ENCODE measurements at regions of chr22 and their contacts with region 1.

Region 1: DNA sequence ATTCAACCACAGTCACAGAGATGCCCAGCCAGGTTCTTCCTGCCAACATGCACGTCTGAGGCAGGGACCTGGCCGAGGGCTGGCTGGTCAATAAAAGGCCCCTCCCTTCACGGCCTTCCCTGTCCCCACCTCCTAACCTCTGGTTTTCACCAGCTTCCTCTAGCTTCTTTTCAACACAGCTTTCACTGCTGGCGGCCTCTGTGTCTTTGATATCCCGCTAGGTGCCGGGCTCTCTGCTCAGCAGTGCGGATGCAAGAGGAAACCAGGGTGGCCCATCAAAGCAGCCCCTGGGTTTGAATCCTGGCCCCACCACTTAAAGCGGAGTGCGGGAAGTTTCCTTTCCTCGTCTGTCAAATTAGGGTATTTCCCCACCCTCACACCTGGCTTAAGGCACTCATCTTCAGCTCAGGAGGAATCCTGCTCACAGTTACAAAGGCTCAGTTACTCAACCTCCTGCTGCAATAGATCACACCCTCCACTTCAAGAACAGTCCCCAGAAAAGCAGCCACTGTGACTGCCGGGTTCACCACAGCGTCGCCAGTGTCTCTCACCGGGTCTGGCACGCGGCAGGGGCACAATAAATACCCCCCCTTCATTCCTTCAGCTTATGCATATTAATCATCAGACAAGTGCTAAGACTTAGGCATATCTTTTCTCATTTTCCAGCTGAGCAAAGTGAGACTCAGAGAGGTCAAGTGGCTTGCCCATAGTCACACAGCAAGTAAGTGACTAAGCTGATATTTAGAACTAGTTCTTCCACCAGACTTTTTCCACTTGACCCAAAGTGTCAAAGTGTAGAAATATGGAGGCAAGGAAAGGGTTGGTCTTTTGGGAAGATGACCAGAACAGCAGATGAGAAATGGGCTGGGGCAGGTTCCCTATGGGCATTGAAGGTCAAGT is 45.7 kb downstream of the TXN2 start:
- DNase-seq: peak; percentile 86
- H3K4me3 Mint-ChIP-seq: peak overlapping the region; percentile 49
- H3K27ac Mint-ChIP-seq: peak overlapping the region; percentile 85
- H3K4me1 Mint-ChIP-seq: peaks cover 42% of the 10 kb centered on the region
- H3K27me3 Mint-ChIP-seq: no peaks in the 10 kb centered on the region

Region 2: DNA sequence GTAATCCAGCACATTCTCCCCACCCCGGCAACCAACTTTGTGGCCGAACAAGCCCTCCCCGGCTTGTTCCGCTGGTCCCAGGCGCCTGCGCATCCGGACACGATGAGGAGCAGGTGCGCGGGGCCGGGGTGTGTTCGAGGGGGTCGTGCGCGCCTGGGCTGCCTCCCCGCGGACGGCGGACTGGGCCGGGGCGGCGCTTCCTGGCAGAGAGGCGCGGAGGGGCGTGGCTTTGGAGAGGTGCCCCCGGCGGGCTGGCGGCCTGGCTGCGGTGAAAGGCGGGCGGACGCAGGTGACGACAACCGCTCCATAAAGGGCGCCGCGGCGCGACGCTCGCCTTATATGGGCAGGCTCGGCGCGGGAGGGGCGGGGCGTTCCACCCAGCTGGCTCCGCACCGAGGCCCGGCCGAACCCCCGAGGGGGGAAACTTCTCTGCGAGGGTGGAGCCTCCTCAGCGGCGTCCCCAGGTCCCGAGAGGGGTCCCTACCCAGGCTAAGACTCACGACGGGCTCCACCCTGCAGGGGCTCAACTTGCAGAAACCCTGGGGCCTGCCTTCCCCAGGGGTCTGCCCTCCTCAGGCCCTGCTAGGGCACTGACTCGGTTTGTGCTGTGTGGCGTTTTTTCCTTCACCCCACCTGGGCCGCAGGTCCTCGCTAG is 19.3 kb after region 1 on chr22:
- CTCF ChIA-PET with region 1: interaction called, 4 read pairs
- intact Hi-C with region 1: loop called (anchors 1 kb)
- DNase-seq: peak; percentile 96
- H3K4me3 Mint-ChIP-seq: peak overlapping the region; percentile 76
- H3K27ac Mint-ChIP-seq: peak overlapping the region; percentile 75
- H3K4me1 Mint-ChIP-seq: peaks cover 37% of the 10 kb centered on the region
- H3K27me3 Mint-ChIP-seq: no peaks in the 10 kb centered on the region

Measured in activated naive CD4-positive, alpha-beta T cell treated with anti-CD3 and anti-CD28 coated beads for 36 hours (primary cell).